ENCODE measurements at regions of chr1 and their contacts with region 1.

Region 1: DNA sequence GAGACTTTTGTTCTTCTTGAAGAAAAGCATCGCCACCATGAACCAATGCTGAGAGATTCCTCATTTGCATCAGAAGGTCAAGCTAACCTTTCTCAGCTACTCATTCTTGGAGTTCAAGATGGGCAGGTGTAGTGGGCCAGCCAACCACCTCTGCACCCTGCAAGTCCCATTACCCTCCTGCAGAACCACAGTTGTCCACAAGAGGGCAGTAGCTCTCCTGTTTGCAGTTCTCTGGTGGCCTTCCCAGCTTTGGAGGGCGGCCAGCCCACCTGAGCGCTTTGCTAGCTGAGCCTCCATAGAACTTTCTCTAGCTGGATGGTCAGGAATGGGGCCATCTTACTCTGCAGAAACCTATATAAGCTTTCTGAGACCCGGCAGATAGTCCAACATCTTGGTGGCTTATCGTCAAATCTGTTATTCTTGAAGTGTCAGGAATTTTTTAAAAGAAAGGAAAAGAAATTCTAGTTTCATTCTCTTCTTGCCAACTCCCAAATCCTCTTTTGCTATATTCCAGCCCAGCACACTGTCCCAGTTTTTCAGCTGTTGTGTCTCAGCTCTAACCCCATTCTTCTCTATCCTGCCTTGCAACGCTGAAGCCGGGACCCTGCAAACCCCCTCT is 11.0 kb upstream of the LMX1A start:
- DNase-seq: peak; percentile 41 to 80 (median 62)
- ATAC-seq: peak; percentile 81
- H3K4me3 ChIP-seq: no peak overlapping the region
- H3K4me3 Mint-ChIP-seq: no peak overlapping the region
- H3K27ac ChIP-seq: no peak overlapping the region
- H3K27ac Mint-ChIP-seq: no peak overlapping the region
- H3K4me1 ChIP-seq: no peaks in the 10 kb centered on the region
- H3K4me1 Mint-ChIP-seq: peaks cover 0 to 6% (median 0%) of the 10 kb centered on the region in 7 donors
- H3K27me3 ChIP-seq: no peaks in the 10 kb centered on the region
- H3K27me3 Mint-ChIP-seq: peaks cover 67 to 79% (median 72%) of the 10 kb centered on the region in 5 donors

Region 2: GRCh38 chr1:163410073-163410999 is 1957.1 kb before region 1 on chr1:
- CTCF ChIA-PET with region 1: no interaction called
- POLR2A ChIA-PET with region 1: no interaction called
- intact Hi-C with region 1: loop called in 1 of 2 experiments (anchors 5 kb)
- DNase-seq: peak in 3 of 9 donors; percentile 1 to 5 (median 4)
- ATAC-seq: no peak
- H3K4me3 ChIP-seq: no peak overlapping the region
- H3K4me3 Mint-ChIP-seq: no peak overlapping the region
- H3K27ac ChIP-seq: no peak overlapping the region
- H3K27ac Mint-ChIP-seq: no peak overlapping the region
- H3K4me1 ChIP-seq: no peaks in the 10 kb centered on the region
- H3K4me1 Mint-ChIP-seq: peaks cover 0 to 8% (median 6%) of the 10 kb centered on the region in 7 donors
- H3K27me3 ChIP-seq: no peaks in the 10 kb centered on the region
- H3K27me3 Mint-ChIP-seq: peaks cover 2 to 29% (median 15%) of the 10 kb centered on the region in 5 donors

Region 3: GRCh38 chr1:165257969-165258459 is 109.5 kb before region 1 on chr1:
- CTCF ChIA-PET with region 1: no interaction called
- POLR2A ChIA-PET with region 1: no interaction called
- intact Hi-C with region 1: loop called in 1 of 2 experiments (anchors 5 kb)
- DNase-seq: peak in 2 of 9 donors; percentile 0 to 33
- ATAC-seq: no peak
- H3K4me3 ChIP-seq: no peak overlapping the region
- H3K4me3 Mint-ChIP-seq: no peak overlapping the region
- H3K27ac ChIP-seq: no peak overlapping the region
- H3K27ac Mint-ChIP-seq: no peak overlapping the region
- H3K4me1 ChIP-seq: no peaks in the 10 kb centered on the region
- H3K4me1 Mint-ChIP-seq: no peaks in the 10 kb centered on the region
- H3K27me3 ChIP-seq: no peaks in the 10 kb centered on the region
- H3K27me3 Mint-ChIP-seq: peaks cover 2 to 43% (median 28%) of the 10 kb centered on the region in 5 donors

Region 4: DNA sequence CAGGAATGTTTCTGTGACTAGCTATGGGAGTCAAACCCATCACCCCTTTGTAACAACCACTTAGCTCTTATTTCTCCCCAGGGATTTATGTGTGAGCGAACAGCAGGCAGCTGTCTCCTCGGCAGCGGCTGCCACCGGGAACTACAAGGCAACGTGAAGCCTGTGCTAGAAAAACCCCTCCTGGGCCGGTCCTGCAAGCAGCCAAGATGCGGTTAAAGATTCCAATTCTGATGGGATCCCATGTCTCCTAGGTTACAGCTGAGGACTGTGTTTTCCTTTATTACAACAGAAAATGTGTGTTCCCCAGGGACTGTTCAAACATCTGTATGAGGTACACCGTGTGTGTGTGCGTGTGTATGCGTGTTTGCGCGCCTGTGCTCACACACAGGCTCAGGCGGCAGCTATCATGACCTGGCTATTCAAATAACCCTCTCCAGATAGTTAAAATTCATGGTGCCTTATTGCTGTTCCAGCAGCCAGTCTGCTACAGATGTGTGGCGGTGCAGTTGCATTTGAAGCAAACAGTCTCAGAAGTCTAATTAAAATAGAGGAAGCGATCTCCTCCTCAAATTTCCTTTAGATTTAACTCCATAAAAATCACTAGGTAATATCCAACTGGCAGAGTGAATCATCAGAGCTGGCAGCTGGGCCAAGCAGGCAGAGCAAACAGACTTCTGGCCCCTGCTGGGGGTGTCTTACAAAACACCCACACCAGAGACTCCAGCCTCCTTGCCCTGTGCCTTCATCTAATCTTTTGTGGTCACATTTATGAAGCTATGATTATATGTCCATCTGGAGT is 78.9 kb before region 1 on chr1:
- CTCF ChIA-PET with region 1: no interaction called
- POLR2A ChIA-PET with region 1: no interaction called
- intact Hi-C with region 1: no loop called
- DNase-seq: no peak
- ATAC-seq: no peak
- H3K4me3 ChIP-seq: no peak overlapping the region
- H3K4me3 Mint-ChIP-seq: no peak overlapping the region
- H3K27ac ChIP-seq: no peak overlapping the region
- H3K27ac Mint-ChIP-seq: no peak overlapping the region
- H3K4me1 ChIP-seq: no peaks in the 10 kb centered on the region
- H3K4me1 Mint-ChIP-seq: no peaks in the 10 kb centered on the region
- H3K27me3 ChIP-seq: no peaks in the 10 kb centered on the region
- H3K27me3 Mint-ChIP-seq: peaks cover 11 to 67% (median 30%) of the 10 kb centered on the region in 5 donors

Region 5: GRCh38 chr1:165424454-165425216 is 57.2 kb after region 1 on chr1:
- CTCF ChIA-PET with region 1: no interaction called
- POLR2A ChIA-PET with region 1: no interaction called
- intact Hi-C with region 1: no loop called
- DNase-seq: peak in 6 of 9 donors; percentile 22 to 56 (median 46)
- ATAC-seq: peak; percentile 69
- H3K4me3 ChIP-seq: peak overlapping the region; percentile 47
- H3K4me3 Mint-ChIP-seq: peak overlapping the region; percentile 79 to 93 (median 87)
- H3K27ac ChIP-seq: peak overlapping the region; percentile 61
- H3K27ac Mint-ChIP-seq: peak overlapping the region; percentile 85 to 95 (median 91)
- H3K4me1 ChIP-seq: peaks cover 5 to 24% of the 10 kb centered on the region in 2 donors
- H3K4me1 Mint-ChIP-seq: peaks cover 14 to 53% (median 38%) of the 10 kb centered on the region in 7 donors
- H3K27me3 ChIP-seq: no peaks in the 10 kb centered on the region
- H3K27me3 Mint-ChIP-seq: peaks cover 0 to 23% (median 0%) of the 10 kb centered on the region in 5 donors